GM12878 (cell line): ENCODE measurements at regions of chrX and their contacts with region 1.

Region 1: DNA sequence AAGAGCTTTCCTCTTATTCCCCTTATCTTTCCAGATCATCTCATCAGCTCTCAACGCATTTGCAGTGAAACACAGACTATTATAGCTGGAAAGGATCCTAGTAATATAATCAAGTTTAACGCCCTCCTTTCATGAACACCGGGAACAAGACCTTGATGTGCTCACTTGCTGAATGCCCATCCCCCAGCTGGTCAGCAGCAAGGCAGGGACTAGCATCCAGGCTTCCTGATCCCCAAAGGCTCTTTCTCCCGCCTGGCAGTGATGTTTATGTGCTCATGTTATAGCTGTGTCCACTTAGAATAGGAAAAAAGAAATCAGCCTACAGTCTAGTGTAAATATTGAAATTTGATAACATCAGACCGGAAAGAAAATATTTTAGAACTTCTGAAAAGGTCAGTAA is 24.6 kb downstream of the GPC4 start:
- DNase-seq: no peak
- ATAC-seq: no peak
- H3K4me3 ChIP-seq: no peak overlapping the region
- H3K27ac ChIP-seq: no peak overlapping the region
- H3K4me1 ChIP-seq: no peaks in the 10 kb centered on the region
- H3K27me3 ChIP-seq: no peaks in the 10 kb centered on the region
- CTCF ChIP-seq: no peak
- EP300 ChIP-seq: no peak
- POLR2A ChIP-seq: no peak
- RAD21 ChIP-seq: no peak

Region 2: DNA sequence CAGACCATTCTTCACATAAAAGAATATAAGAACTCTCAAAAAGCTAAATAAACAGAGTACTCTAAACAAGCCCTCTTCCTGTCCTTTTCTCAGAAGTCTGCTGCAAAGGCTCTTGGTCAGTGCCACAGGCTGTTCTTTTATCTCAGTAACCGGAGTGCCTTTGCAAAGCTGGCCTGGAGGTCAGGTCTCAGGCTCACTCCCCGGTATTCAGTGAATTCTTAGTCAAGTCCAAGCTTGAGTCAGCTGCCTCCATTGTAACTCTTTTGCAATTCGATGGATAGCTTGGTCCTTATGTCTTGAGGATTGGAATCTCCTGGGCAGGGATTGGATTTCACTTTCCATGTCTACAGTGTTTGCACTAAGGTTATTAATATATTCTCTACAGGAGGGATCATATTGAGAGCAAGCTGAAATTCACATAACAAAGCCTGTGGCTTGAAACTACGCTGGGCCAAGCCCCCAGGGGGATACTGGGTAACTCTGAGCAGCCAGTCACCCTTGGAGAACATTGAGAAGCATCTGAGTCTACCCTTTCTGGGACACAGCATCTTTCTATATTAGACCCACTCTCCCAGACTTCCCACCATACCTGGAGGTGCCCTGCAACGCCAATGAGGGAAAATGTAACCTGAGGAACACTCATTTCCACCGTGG is 422.3 kb before region 1 on chrX:
- CTCF ChIA-PET with region 1: no interaction called
- POLR2A ChIA-PET with region 1: no interaction called
- RAD21 ChIA-PET with region 1: no interaction called
- SMC1A ChIA-PET with region 1: no interaction called
- in situ Hi-C with region 1: no loop called
- intact Hi-C with region 1: no loop called
- DNase-seq: no peak
- ATAC-seq: no peak
- H3K4me3 ChIP-seq: no peak overlapping the region
- H3K27ac ChIP-seq: no peak overlapping the region
- H3K4me1 ChIP-seq: no peaks in the 10 kb centered on the region
- H3K27me3 ChIP-seq: no peaks in the 10 kb centered on the region
- CTCF ChIP-seq: no peak
- EP300 ChIP-seq: no peak
- POLR2A ChIP-seq: no peak
- RAD21 ChIP-seq: no peak

Region 3: DNA sequence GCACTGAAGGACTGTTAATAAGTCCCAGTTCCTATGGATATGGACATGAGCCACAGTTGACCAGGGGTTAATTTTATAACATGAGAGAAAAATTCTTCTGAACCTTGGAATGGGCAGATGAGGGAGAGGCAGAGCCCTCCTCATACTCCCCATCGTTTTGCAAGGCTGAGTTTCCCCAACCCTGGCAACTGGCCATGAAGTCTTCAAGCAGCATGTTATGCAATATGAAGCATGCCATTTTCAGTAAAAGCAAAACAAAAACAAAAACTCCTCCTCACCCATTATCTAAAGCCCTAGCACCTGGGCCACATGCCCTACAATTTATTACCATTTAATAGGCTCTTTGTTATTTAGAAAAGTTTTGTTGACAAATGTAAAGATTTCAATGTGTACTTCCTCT is 39.9 kb before region 1 on chrX:
- CTCF ChIA-PET with region 1: no interaction called
- POLR2A ChIA-PET with region 1: no interaction called
- RAD21 ChIA-PET with region 1: interaction called, 6 read pairs
- SMC1A ChIA-PET with region 1: interaction called, 10 read pairs
- in situ Hi-C with region 1: no loop called
- intact Hi-C with region 1: no loop called
- DNase-seq: no peak
- ATAC-seq: no peak
- H3K4me3 ChIP-seq: no peak overlapping the region
- H3K27ac ChIP-seq: no peak overlapping the region
- H3K4me1 ChIP-seq: no peaks in the 10 kb centered on the region
- H3K27me3 ChIP-seq: no peaks in the 10 kb centered on the region
- CTCF ChIP-seq: no peak
- EP300 ChIP-seq: no peak
- POLR2A ChIP-seq: no peak
- RAD21 ChIP-seq: no peak

Region 4: GRCh38 chrX:133359466-133359865 is 31.2 kb before region 1 on chrX:
- CTCF ChIA-PET with region 1: interaction called, 4 read pairs
- POLR2A ChIA-PET with region 1: interaction called, 7 read pairs
- RAD21 ChIA-PET with region 1: interaction called, 11 read pairs
- SMC1A ChIA-PET with region 1: interaction called, 5 read pairs
- in situ Hi-C with region 1: no loop called
- intact Hi-C with region 1: no loop called
- DNase-seq: no peak
- ATAC-seq: no peak
- H3K4me3 ChIP-seq: no peak overlapping the region
- H3K27ac ChIP-seq: no peak overlapping the region
- H3K4me1 ChIP-seq: no peaks in the 10 kb centered on the region
- H3K27me3 ChIP-seq: no peaks in the 10 kb centered on the region
- CTCF ChIP-seq: no peak
- EP300 ChIP-seq: no peak
- POLR2A ChIP-seq: no peak
- RAD21 ChIP-seq: no peak

Region 5: GRCh38 chrX:133365871-133366611 is 24.6 kb before region 1 on chrX:
- CTCF ChIA-PET with region 1: interaction called, 7 read pairs
- POLR2A ChIA-PET with region 1: interaction called, 7 read pairs
- RAD21 ChIA-PET with region 1: interaction called, 11 read pairs
- SMC1A ChIA-PET with region 1: interaction called, 13 read pairs
- in situ Hi-C with region 1: no loop called
- intact Hi-C with region 1: no loop called
- DNase-seq: no peak
- ATAC-seq: 0 out of 3 replicates have a peak, but pooled peaks have one; percentile 28
- H3K4me3 ChIP-seq: no peak overlapping the region
- H3K27ac ChIP-seq: no peak overlapping the region
- H3K4me1 ChIP-seq: no peaks in the 10 kb centered on the region
- H3K27me3 ChIP-seq: no peaks in the 10 kb centered on the region
- CTCF ChIP-seq: no peak
- EP300 ChIP-seq: no peak
- POLR2A ChIP-seq: no peak
- RAD21 ChIP-seq: no peak

Region 6: DNA sequence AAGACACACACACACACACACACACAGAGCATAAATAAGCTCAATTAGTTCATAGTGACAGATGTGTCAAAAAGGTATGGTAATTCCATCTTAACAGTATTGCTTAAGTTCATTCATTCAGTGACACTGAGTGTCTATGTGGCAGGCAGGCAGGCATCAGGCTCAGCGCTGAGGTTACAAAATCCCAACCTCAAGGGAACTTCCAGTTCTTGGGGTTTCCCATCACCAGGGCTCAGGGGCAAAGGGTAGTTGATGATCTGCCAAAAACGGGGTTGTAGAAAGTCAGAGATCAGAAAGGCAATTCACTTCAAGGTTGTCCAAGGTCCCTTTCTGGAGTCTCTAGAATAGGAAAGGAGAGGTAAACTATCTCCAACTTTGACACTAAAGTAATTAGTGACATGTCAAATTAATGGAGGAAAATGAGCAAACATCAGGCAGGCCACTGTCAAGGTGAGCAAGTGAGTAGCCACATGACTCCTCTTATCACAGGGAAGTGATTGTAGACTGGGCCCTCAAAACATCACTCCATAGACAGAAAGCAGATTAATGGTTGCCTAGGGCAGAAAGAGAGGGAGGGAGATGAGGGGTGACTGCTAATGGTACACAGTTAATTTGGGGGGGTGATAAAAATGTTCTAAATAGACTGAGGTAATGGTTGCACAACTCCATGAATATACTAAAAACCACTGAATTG is 17.1 kb before region 1 on chrX:
- CTCF ChIA-PET with region 1: interaction called, 7 read pairs
- POLR2A ChIA-PET with region 1: interaction called, 9 read pairs
- RAD21 ChIA-PET with region 1: interaction called, 7 read pairs
- SMC1A ChIA-PET with region 1: interaction called, 16 read pairs
- in situ Hi-C with region 1: no loop called
- intact Hi-C with region 1: no loop called
- DNase-seq: no peak
- ATAC-seq: peak; percentile 79
- H3K4me3 ChIP-seq: no peak overlapping the region
- H3K27ac ChIP-seq: no peak overlapping the region
- H3K4me1 ChIP-seq: no peaks in the 10 kb centered on the region
- H3K27me3 ChIP-seq: no peaks in the 10 kb centered on the region
- CTCF ChIP-seq: no peak
- EP300 ChIP-seq: 0 out of 4 replicates have a peak, but pooled peaks of 1 of the 2 experiments have one; percentile 28
- POLR2A ChIP-seq: no peak
- RAD21 ChIP-seq: no peak

Region 7: DNA sequence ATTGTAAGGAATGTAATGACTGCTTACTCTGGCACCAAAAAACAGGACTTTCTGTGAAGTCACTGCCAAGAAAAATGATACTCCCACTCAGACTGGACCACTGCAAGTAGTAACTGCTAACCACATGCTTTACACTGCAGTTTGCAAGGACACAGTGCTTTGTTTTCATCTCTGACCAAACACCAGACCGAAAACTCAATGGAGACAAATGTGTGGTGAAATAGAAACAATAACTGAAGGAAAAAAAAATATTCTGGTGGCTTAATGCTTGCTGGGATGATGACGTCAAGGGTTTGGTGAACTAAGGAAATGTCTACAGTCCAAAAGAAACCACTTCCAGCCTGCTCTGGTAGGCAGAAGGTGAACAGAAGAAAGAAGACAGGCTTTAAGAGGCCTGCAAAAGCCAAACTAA is 11.4 kb after region 1 on chrX:
- CTCF ChIA-PET with region 1: interaction called, 3 read pairs
- POLR2A ChIA-PET with region 1: interaction called, 10 read pairs
- RAD21 ChIA-PET with region 1: interaction called, 7 read pairs
- SMC1A ChIA-PET with region 1: interaction called, 29 read pairs
- in situ Hi-C with region 1: no loop called
- intact Hi-C with region 1: no loop called
- DNase-seq: no peak
- ATAC-seq: peak; percentile 77
- H3K4me3 ChIP-seq: no peak overlapping the region
- H3K27ac ChIP-seq: no peak overlapping the region
- H3K4me1 ChIP-seq: no peaks in the 10 kb centered on the region
- H3K27me3 ChIP-seq: no peaks in the 10 kb centered on the region
- CTCF ChIP-seq: no peak
- EP300 ChIP-seq: no peak
- POLR2A ChIP-seq: no peak
- RAD21 ChIP-seq: no peak

Region 8: GRCh38 chrX:133415276-133416105 is 24.8 kb after region 1 on chrX and contains the start of gene GPC4:
- CTCF ChIA-PET with region 1: interaction called, 10 read pairs
- POLR2A ChIA-PET with region 1: interaction called, 18 read pairs
- RAD21 ChIA-PET with region 1: interaction called, 15 read pairs
- SMC1A ChIA-PET with region 1: interaction called, 38 read pairs
- in situ Hi-C with region 1: no loop called
- intact Hi-C with region 1: no loop called
- DNase-seq: no peak
- ATAC-seq: peak; percentile 50
- H3K4me3 ChIP-seq: no peak within 1 kb of the TSS
- H3K27ac ChIP-seq: no peak within 1 kb of the TSS
- H3K4me1 ChIP-seq: no peaks in the 10 kb centered on the region
- H3K27me3 ChIP-seq: no peaks in the 10 kb centered on the region
- CTCF ChIP-seq: no peak
- EP300 ChIP-seq: no peak
- POLR2A ChIP-seq: no peak
- RAD21 ChIP-seq: no peak
- polyA plus RNA-seq, gene GPC4: 0.04 to 0.08 TPM